HEK293T (cell line): ENCODE measurements at regions of chr17 and their contacts with region 1.

Region 1: GRCh38 chr17:17836250-17836817 is 452 bp downstream of the SREBF1 start:
- DNase-seq: peak; percentile 98

Region 2: GRCh38 chr17:17729620-17730249 is 106.6 kb before region 1 on chr17:
- CTCF ChIA-PET with region 1: no interaction called
- POLR2A ChIA-PET with region 1: no interaction called
- DNase-seq: peak; percentile 39

Region 3: DNA sequence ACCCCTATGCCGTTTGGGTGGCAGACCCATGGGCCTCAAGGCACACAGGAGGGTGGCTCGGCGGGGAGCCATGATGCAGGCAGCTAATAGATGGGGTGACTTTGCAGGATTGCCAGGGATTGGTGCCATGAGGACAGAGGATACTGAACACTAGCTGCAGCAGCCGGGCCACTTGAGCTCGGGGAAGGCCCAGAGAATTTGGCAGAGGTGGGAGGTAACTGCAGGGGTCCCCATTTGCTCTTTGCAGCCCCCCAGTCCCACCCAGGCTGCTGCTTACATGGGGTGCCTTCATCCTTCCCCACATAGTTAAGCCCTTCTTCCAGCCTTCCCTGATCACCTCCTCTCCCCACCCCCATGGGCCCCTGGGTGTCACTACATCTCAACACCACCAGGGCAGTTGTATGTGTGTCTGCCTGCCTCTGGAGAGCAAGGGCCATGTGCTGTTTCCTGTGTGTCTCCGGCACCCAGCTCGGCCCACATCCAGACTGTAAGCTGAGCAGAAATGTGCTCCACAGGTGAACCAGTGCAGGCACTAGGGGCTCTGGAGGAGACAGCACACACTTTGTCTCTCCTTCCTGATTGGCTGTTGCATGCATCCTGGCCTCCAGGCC is 51.6 kb before region 1 on chr17:
- CTCF ChIA-PET with region 1: no interaction called
- POLR2A ChIA-PET with region 1: interaction called, 10 read pairs
- DNase-seq: peak; percentile 48

Region 4: GRCh38 chr17:17823433-17824118 is 12.8 kb before region 1 on chr17:
- CTCF ChIA-PET with region 1: interaction called, 3 read pairs
- POLR2A ChIA-PET with region 1: interaction called, 369 read pairs
- DNase-seq: peak; percentile 96

Region 5: GRCh38 chr17:17859909-17860765 is 23.8 kb after region 1 on chr17:
- CTCF ChIA-PET with region 1: interaction called, 9 read pairs
- POLR2A ChIA-PET with region 1: interaction called, 196 read pairs
- DNase-seq: peak; percentile 82

Region 6: DNA sequence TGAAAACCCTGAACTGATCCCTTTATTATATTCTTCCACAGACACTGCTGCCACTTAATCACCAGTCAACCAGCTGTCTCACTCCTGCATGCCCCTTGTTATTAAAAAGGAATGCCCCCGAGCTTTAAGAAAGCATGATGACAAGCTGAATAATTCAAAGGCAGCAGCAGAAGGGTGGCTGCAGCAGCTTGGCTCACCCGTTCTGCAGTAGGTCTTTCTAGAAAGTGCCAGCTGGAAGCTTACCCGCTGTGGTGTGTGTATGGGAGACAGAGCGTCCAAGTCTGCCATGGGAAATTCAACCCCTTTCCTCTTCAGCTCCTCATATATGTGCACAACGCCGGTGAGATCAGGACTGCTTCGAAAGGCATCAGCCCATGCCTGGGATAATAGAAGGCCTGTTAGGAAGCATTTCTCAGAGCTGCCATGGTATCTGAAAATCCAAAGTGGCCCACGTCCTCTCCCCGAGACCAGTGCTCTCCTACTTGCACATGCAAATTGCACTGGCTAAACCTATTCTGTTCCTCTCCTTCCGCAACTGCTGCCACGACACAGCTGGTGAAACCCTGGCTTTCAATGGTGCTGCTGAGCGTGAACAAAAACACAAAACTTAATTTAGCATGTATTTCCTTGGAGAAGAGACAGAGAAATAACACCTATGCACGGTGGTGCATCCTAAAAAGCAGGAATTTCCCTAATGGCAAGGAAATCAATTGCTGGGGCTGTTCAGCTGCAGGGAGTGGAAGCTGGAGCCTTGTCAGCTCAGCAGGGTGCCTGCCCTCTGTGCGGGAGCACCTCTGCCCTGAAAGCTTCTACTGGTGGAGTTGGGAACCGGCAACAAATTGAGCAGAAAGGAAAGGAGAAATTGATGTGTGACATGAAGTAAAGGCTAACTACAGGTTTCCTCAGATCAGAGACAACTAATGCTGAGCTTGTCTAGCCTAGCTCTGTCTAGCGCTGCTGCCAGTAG is 48.3 kb after region 1 on chr17:
- CTCF ChIA-PET with region 1: no interaction called
- POLR2A ChIA-PET with region 1: interaction called, 11 read pairs
- DNase-seq: peak; percentile 28

Region 7: GRCh38 chr17:17907469-17907868 is 71.1 kb after region 1 on chr17:
- CTCF ChIA-PET with region 1: no interaction called
- POLR2A ChIA-PET with region 1: no interaction called
- DNase-seq: no peak

Region 8: GRCh38 chr17:18025945-18026776 is 189.8 kb after region 1 on chr17:
- CTCF ChIA-PET with region 1: no interaction called
- POLR2A ChIA-PET with region 1: no interaction called
- DNase-seq: no peak